ENCODE measurements at regions of chr12 and their contacts with region 1.

Region 1: DNA sequence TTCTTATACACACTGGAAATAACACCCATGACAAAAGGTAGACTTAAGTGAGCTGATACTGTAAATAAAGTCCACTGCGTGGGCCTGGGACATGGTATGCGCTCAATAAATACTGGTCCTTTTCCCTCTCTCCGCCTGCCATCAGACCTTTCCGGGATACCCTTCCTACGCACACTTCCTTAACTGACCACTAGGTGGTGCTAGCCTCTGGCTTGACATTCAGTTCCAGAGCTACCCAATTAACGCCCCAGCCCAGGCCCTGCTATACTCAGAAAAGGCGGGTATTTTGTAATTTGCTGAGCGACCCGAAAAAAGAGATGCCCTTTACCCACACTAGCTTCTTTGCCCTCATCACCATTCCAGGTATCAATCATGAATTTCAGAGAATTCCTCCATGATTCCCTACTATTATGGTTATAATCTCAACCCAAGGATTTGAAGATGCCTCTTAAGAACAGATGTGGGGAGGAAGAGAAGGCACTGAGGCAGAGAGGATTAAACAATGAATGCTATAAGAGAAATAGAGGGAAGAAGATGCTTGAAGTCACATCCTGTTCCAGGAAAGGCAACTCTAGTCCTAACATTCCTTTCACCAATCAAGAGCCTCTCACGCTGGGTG is 3.9 kb upstream of the LRP1 start:
- DNase-seq: peak; percentile 85
- H3K4me3 Mint-ChIP-seq: no peak overlapping the region
- H3K27ac Mint-ChIP-seq: no peak overlapping the region
- H3K4me1 Mint-ChIP-seq: peaks cover 11% of the 10 kb centered on the region
- H3K27me3 Mint-ChIP-seq: peaks cover 57% of the 10 kb centered on the region

Region 2: DNA sequence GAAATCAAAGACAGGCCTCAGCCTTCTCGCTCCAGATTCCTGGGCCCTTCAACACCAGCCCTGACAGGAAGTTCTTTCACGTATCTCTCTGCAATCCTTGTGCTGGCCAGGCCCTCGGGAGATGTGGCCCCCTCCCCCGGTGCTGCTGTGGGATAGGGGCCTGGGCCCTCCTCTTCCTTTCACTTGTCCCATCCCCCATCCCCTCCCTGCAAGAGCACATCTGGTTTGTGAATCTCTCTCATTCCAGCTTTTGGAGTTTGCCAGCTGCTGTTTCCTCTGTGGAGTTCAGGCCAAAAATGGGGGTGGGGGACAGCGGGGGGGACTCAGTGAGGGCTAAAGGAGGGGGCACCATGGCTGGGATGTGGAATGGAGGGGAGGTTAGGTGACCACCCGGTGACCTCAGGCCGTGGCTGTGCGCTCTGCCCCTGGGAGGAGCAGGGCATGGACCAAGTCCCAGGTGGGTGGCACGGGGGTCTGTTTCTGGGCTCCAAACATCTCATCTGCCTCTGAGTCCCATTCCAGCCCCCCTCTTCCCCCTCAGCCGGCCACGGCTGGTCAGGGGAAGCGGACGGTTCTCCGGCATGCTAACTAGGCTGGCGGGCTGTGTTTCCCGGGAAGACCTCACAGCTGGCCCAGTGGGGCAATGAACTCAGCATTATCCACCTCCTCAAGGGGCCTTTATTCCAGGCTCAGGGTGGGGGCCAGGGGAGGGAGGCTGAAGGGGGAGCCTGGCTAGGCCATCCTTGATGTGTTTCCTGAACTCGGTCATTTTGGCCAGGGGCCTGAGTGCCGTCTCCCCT is 11.4 kb after region 1 on chr12:
- CTCF ChIA-PET with region 1: interaction called, 11 read pairs
- DNase-seq: no peak
- H3K4me3 Mint-ChIP-seq: no peak overlapping the region
- H3K27ac Mint-ChIP-seq: no peak overlapping the region
- H3K4me1 Mint-ChIP-seq: no peaks in the 10 kb centered on the region
- H3K27me3 Mint-ChIP-seq: peaks cover 47% of the 10 kb centered on the region

Region 3: DNA sequence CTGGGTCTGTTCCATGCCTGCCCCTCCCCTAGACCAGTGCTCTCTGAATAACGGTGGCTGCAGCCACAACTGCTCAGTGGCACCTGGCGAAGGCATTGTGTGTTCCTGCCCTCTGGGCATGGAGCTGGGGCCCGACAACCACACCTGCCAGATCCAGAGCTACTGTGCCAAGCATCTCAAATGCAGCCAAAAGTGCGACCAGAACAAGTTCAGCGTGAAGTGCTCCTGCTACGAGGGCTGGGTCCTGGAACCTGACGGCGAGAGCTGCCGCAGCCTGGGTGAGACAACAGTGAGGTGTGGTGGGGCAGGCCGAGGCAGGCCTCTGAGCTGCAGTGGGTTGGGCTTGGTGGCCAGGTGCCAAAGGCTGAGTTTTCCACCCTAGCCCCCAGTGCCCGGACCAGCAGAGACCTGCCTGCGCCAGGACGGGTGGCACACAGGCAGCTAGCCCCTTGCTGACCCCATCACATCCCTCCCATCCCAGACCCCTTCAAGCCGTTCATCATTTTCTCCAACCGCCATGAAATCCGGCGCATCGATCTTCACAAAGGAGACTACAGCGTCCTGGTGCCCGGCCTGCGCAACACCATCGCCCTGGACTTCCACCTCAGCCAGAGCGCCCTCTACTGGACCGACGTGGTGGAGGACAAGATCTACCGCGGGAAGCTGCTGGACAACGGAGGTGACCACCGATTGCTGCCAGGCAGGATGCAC is 51.2 kb after region 1 on chr12:
- CTCF ChIA-PET with region 1: interaction called, 151 read pairs
- DNase-seq: peak; percentile 53
- H3K4me3 Mint-ChIP-seq: no peak overlapping the region
- H3K27ac Mint-ChIP-seq: no peak overlapping the region
- H3K4me1 Mint-ChIP-seq: no peaks in the 10 kb centered on the region
- H3K27me3 Mint-ChIP-seq: peaks cover 5% of the 10 kb centered on the region

Region 4: DNA sequence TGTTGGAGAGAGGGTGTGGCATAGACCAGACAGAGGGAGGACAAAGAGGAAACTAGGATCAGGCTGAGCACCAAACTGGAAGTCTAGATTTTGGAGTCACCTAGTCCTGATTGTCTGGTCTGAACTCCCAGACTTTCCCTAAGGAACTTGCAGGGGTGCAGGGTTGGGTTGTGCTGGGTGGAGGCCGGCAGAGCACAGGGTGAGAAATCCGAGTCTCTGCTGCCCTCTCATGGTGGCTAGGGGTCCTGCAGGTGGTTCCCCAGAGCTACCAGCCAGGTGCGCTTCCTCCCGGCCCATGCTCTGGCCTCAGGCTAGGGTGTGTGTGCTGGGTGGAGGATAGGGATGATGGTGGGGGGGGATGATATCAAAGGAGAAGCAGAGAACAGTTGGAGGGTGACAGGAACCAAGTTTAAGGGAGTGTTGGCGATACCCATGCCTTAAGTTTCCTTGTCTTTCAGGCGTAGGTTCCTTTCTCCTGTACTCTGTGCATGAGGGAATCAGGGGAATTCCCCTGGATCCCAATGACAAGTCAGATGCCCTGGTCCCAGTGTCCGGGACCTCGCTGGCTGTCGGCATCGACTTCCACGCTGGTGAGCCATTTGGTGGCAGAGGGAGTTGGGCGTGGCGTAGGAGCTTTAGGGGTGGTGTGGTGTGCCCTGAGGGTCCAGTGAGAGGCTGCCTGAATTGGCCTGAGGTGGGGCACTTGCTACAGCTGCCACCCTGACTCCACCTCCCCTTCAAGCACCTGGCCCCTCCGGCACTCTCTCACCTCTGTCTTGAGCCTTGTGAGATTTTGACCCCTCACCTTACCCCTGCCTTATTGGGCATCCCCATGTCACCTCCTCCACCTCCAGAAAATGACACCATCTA is 58.8 kb after region 1 on chr12:
- CTCF ChIA-PET with region 1: interaction called, 151 read pairs
- DNase-seq: peak; percentile 88
- H3K4me3 Mint-ChIP-seq: no peak overlapping the region
- H3K27ac Mint-ChIP-seq: no peak overlapping the region
- H3K4me1 Mint-ChIP-seq: peaks cover 4% of the 10 kb centered on the region
- H3K27me3 Mint-ChIP-seq: peaks cover 21% of the 10 kb centered on the region

Region 5: DNA sequence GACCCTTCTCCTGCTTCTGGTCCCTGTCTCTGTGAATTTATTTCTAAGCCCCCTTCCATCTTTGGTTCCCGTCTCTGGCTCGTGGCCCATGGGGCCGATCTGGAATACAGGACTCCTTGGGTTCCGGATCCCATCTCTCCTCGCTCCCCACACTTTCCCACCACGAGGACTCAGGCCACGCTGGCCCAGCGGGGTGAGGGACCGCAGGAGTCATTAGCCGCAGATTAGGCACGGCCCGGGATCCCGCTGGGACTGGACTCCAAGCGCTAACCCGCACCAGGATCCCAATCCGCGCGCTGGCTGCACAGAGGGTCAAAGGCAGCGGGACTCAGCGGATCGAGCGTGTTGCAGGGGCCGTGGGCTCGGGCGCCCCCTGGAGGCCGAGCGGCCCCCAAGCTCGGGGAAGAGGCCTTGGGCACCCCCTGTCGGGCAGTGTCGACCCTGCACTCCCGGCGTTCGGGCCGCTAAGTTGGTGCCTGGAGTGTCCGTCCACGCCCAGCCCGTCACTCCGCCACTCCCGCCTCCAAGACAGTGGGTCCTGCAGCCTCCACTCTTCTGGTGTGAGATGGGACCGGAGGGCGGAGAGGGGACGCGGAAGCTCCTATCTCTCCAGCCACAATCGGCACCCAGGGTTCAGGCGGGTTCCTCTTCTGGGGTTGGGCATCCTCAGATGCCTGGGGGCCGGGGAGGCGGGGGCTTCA is 114.6 kb after region 1 on chr12:
- CTCF ChIA-PET with region 1: interaction called, 11 read pairs
- DNase-seq: peak; percentile 90
- H3K4me3 Mint-ChIP-seq: peak overlapping the region; percentile 95
- H3K27ac Mint-ChIP-seq: peak overlapping the region; percentile 49
- H3K4me1 Mint-ChIP-seq: peaks cover 87% of the 10 kb centered on the region
- H3K27me3 Mint-ChIP-seq: peaks cover 89% of the 10 kb centered on the region

Measured in activated naive CD4-positive, alpha-beta T cell treated with anti-CD3 and anti-CD28 coated beads, Interleukin-2, amount 10 ng/mL, durations not matched to agents 7 days and 5 days (primary cell).